ENCODE measurements at regions of chr3 and their contacts with region 1.

Region 1: DNA sequence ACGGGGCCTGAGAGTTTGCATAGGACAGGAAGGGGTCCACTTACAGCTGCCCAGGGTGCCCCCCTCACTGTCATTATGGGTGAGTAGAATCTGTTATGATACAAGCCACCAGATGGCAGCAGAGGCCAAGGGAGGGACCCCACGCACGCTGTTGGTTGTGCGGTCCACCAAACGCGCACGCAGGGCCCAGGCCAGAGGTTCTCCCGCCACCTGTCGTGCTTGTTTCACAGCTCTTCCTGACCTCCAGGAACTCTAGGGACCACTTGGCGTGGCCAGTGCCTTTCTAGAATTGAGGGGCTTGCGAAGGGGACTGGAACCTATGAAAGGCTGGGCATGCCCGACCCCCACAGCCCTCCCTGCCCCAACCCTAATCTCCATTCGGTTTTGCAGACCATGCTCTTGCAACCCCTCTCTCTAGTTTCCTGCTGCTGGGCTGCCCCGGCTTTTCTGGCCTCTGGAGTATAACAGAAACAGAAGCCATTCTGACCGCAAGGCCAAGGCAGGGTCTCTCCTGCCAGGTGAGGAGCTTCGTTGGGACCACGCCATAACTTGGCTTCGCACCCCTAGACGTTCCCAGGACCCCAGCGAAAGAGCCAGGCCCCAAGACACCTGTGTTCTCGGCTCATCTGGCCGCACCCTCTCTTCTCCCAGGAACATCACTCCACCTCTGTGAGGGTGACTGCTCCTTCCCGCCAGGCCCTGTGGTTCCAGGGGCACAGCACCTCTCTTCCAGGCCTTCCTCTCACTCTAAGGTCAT is 46.0 kb downstream of the ALDH1L1 start:
- DNase-seq: peak; percentile 57 to 80 (median 76)
- H3K4me3 ChIP-seq: no peak overlapping the region
- H3K27ac ChIP-seq: no peak overlapping the region
- H3K4me1 ChIP-seq: peaks cover 0 to 10% (median 6%) of the 10 kb centered on the region in 4 experiments
- H3K27me3 ChIP-seq: peaks cover 0 to 6% (median 0%) of the 10 kb centered on the region in 5 experiments

Region 2: GRCh38 chr3:126056681-126057546 is 77.5 kb before region 1 on chr3:
- CTCF ChIA-PET with region 1: no interaction called
- POLR2A ChIA-PET with region 1: no interaction called
- DNase-seq: no peak
- H3K4me3 ChIP-seq: no peak overlapping the region
- H3K27ac ChIP-seq: no peak overlapping the region
- H3K4me1 ChIP-seq: peaks cover 0 to 12% (median 11%) of the 10 kb centered on the region in 4 experiments
- H3K27me3 ChIP-seq: no peaks in the 10 kb centered on the region

Region 3: DNA sequence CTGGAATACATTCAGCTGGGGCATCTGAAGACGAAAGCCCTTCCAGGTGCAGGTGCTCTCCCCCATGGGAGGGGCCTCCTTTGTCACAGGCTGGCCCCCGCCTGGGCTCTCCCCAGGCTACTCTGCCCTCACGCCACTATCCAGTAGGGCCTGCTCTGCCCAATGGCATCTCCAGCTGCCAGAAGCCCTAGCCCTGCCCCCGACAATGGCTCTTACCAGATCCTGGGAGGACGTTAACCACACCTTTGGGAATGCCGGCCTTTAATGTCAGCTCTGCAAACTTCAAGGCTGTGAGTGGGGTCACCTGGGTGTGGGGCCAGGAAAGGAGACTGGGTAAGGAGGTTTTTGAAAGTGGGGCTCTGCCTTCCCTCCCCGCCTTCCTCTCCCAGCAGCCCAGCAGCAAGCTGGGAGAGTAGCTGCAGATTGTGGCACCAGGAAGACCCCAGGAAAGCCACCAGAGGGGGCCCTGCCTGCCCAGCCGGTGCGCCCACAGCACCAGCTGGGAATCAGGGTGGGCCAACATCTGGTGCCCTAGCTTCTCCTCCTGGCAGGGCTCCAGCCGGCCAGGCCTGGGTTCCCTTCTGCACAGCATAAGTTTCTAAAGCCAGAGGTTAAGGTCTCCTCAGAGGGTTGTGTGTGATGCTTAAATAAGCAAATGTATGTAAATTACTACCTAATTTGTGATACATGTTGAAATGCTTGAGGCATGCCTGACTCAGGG is 10.1 kb before region 1 on chr3:
- CTCF ChIA-PET with region 1: interaction called, 15 read pairs
- POLR2A ChIA-PET with region 1: no interaction called
- DNase-seq: no peak
- H3K4me3 ChIP-seq: no peak overlapping the region
- H3K27ac ChIP-seq: no peak overlapping the region
- H3K4me1 ChIP-seq: peaks cover 0 to 2% (median under 1%) of the 10 kb centered on the region in 4 experiments
- H3K27me3 ChIP-seq: peaks cover 0 to 2% (median 0%) of the 10 kb centered on the region in 5 experiments

Region 4: DNA sequence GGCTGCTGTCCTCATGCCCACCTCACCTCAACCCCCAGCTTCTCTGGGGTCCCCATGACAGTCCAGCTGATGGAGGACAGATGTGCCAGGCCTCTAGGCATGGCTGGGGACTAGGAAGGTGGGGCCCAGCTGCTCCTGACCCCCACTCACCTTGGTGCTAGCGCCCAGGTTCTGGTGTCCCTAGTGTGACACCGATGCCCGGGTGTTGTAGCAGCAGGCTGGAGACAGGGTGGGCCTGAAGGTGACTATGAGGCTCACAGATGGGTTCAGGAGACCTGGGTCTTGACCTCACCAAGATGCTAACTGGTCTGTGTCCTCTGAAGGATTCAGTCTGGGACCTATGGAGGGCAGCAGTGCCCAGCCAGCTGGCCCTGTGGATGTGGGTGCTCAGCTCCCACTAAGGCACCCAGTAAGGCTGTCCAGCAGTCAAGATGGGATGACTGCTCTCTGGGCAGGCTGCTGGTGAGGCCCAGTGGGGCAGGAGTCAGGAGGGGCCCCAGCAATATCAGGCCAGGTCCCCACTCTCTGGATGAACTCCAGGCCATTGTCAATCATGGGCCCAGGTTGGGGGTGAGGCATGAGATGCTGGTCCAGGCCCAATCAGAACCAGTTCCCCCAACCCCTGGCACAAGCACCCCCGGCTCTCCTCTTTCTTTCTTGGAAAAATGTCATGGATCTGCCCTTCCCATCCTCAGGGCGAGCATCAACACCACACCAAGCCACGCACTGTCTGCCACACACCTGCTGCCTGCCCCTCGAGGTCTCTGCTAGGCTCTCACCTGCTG is 12.9 kb after region 1 on chr3:
- CTCF ChIA-PET with region 1: interaction called, 11 read pairs
- POLR2A ChIA-PET with region 1: no interaction called
- DNase-seq: no peak
- H3K4me3 ChIP-seq: no peak overlapping the region
- H3K27ac ChIP-seq: no peak overlapping the region
- H3K4me1 ChIP-seq: no peaks in the 10 kb centered on the region
- H3K27me3 ChIP-seq: peaks cover 4 to 14% (median 4%) of the 10 kb centered on the region in 5 experiments

Region 5: DNA sequence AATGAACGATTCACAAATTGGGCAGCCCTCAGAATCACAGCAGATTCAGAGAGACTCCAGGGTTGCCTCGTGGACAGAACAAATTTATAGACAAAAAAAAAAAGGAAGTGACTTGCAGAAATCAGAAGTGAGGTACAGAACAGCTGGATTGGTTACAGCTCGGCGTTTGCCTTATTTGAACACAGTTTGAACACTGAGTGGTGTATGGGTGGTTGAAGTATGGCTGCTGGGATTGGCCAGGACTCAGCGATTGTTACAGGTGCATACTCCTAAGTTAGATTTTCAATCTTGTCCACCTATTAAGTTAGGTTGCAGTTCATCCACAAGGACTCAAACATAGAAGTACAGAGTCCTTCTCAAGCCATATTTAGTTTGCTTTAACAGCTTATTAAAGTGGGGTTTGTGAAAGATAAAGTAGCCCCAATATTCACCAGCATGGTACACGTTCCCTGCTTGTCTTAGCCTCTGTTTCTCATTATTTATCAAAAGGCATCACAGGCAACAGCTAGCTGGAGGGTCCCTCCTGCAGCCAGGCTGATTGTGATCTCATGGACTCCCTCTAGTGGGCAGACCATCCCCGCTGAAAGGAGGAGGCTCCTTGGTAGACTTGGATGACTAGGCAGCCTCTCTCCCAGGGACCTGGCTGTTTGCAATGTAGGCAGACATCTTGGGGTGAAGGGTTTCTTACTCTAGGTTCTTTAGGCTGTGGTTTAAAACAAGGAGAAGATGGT is 63.6 kb after region 1 on chr3:
- CTCF ChIA-PET with region 1: interaction called, 10 read pairs
- POLR2A ChIA-PET with region 1: no interaction called
- DNase-seq: peak; percentile 67 to 75 (median 74)
- H3K4me3 ChIP-seq: peak overlapping the region in 1 of 7 experiments; percentile 30
- H3K27ac ChIP-seq: no peak overlapping the region
- H3K4me1 ChIP-seq: peaks cover 0 to 7% (median 0%) of the 10 kb centered on the region in 4 experiments
- H3K27me3 ChIP-seq: peaks cover 0 to 4% (median 0%) of the 10 kb centered on the region in 5 experiments

Region 6: DNA sequence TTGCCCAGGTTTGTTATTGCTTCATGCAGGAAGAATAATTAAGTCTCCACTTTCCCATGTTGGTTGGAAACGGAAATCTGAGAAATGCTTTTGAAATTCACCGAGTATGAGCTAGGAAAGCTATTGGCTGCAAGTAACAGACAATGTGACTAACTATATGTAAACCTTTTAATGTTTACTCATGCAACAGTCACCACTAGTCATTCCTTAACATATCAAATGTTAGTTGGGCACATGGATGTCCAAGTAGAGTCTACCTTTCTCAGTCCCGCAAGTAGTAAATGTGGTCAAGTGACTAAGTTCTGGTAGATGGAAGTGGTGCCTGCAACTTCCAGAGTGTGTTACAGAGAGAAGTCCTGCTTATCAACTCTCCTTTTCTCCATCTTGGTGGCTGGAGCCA is 170.3 kb after region 1 on chr3:
- CTCF ChIA-PET with region 1: no interaction called
- POLR2A ChIA-PET with region 1: no interaction called
- DNase-seq: no peak
- H3K4me3 ChIP-seq: no peak overlapping the region
- H3K27ac ChIP-seq: no peak overlapping the region
- H3K4me1 ChIP-seq: peaks cover 0 to 9% (median 4%) of the 10 kb centered on the region in 4 experiments
- H3K27me3 ChIP-seq: no peaks in the 10 kb centered on the region

Region 7: GRCh38 chr3:126389112-126389793 is 254.9 kb after region 1 on chr3:
- CTCF ChIA-PET with region 1: interaction called, 69 read pairs
- POLR2A ChIA-PET with region 1: no interaction called
- DNase-seq: peak; percentile 86 to 89 (median 88)
- H3K4me3 ChIP-seq: peak overlapping the region; percentile 15 to 68 (median 46)
- H3K27ac ChIP-seq: peak overlapping the region in 1 of 2 experiments; percentile 34
- H3K4me1 ChIP-seq: peaks cover 0 to 9% (median 8%) of the 10 kb centered on the region in 4 experiments
- H3K27me3 ChIP-seq: peaks cover 0 to 48% (median 19%) of the 10 kb centered on the region in 5 experiments

Measured in common myeloid progenitor, CD34-positive (primary cell).